G401 (cell line): ENCODE measurements at regions of chr9 and their contacts with region 1.

Region 1: DNA sequence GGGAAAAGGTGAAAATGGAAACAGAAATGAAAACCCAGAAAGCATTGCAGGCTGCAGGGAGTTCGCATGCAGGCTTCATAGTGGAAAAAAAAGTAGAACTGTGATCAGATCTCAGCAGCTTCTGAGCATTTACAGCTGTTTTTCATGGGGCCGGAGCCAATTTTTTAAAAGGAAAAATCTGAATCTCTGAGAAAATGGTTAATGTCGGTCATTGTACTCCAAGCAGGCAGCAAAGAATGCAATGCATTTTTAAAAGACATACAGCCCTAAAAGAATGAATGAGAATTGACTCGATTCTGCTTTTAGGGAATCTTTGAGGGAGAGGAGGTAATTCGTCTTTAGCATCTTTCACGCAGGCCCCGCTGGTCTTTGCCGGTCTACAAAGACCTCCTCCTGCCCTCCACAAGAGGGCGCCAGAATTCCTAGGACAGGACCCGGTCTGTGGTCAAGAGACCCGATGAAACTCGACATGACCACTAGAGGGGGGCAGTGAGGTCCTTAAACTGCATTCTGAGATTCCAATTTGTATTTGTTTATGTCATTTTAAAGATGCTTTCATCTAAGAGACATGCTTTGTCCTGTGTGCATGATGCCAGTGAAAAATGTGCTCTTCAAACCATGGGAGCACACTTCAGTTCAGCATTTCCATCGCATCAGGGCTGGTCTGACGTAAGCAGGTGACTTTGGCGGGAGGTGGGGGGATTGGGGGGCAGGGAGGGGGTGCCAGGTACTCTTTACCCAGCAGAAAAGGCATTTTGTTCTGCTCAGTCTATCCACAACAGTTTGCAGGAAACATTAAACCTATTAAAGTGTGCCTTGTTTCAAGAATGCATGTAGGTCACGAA is 43.7 kb upstream of the TMEM252 start:
- DNase-seq: peak; percentile 90

Region 2: GRCh38 chr9:68999393-69000105 is 415.1 kb after region 1 on chr9:
- in situ Hi-C with region 1: loop called (anchors 10 kb)
- DNase-seq: peak; percentile 90

Region 3: DNA sequence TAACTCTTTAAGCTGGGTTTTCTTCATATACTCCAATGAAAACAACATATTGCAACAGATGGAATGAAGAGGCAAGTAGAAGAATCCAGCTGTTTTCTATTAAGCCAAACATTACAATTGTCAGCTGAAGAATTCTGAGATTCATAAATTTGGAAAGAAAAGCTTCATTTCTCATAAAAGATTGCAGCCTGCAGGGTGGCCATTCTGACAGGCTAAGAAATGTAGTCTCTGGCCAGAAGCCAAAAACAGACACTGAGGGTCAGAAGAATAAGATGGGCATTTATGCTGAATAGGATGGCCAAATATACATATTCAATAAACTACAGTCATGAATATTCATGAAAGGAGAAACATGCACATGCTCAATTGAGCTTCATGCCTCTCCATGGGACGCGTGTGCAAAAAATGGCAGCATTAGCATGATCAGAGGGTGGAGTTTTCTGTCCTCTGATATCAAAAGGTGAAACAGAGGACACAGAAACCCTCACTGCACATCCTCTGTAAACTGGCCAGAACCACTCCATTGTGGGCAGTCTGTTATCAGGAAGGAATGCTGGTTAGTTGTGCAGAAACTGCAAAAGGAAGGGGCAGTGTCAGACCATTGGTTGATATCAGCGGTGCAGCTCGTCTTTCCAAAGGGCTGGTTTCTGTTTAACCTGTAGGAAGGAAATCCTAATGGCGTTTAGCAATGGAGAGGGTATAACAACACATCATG is 501.3 kb after region 1 on chr9:
- in situ Hi-C with region 1: no loop called
- DNase-seq: no peak